ENCODE measurements at regions of chr14 and their contacts with region 1.

Region 1: DNA sequence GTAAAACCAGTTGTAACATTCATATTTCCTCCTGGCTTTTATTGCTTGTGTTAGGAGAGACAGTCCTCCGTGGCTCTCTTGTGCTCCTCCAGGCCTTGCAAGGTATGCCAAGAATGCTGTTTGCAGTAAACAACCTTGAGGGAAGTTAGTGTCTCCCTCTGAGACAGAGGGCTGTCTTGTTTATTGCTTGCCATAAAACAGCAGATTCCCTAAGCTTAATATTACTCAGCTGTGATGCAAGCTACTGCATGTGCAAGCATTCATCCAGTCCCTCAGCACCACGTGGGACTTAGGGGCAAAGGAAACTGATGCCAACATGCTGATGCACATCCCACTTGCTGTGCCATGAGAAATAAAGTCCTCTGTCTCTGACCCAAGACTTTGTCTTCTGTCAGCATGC is 6.6 kb downstream of the POMT2 start:
- DNase-seq: no peak
- CTCF ChIP-seq: no peak

Region 2: GRCh38 chr14:77151918-77152588 is 162.0 kb before region 1 on chr14:
- CTCF ChIA-PET with region 1: interaction called, 65 read pairs
- POLR2A ChIA-PET with region 1: no interaction called
- DNase-seq: peak; percentile 64
- CTCF ChIP-seq: no peak

Region 3: GRCh38 chr14:77268989-77269600 is 44.9 kb before region 1 on chr14:
- CTCF ChIA-PET with region 1: interaction called, 11 read pairs
- POLR2A ChIA-PET with region 1: no interaction called
- DNase-seq: no peak
- CTCF ChIP-seq: no peak

Region 4: GRCh38 chr14:77301103-77301502 is 12.9 kb before region 1 on chr14:
- CTCF ChIA-PET with region 1: interaction called, 247 read pairs
- POLR2A ChIA-PET with region 1: no interaction called
- DNase-seq: peak; percentile 73
- CTCF ChIP-seq: peak; percentile 51

Region 5: DNA sequence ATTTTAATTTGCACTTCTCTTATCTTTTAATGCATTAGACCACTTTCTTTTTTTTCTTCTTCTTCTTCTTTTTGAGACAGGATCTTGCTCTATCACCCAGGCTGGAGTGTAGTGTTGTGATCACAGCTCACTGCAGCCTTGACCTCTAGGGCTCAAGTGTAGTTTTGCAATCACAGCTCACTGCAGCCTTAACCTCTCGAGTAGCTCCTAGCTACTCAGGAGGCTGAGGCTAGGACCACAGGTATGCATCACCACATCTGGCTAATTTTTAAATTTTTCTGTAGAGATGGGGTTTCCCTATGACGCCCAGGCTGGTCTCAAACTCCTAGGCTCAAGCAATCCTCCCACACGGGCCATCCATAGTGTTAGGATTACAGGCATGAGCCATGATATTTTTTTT is 50.1 kb after region 1 on chr14:
- CTCF ChIA-PET with region 1: interaction called, 12 read pairs
- POLR2A ChIA-PET with region 1: no interaction called
- DNase-seq: no peak
- CTCF ChIP-seq: no peak

Region 6: GRCh38 chr14:77717608-77718305 is 403.7 kb after region 1 on chr14:
- CTCF ChIA-PET with region 1: no interaction called
- POLR2A ChIA-PET with region 1: no interaction called
- DNase-seq: no peak
- CTCF ChIP-seq: no peak

Region 7: GRCh38 chr14:77965919-77966435 is 651.9 kb after region 1 on chr14:
- CTCF ChIA-PET with region 1: no interaction called
- POLR2A ChIA-PET with region 1: no interaction called
- DNase-seq: peak; percentile 51
- CTCF ChIP-seq: no peak

Measured in GM10248 (cell line).